Colonic mucosa (tissue), 4 donors: ENCODE measurements at regions of chr22 and their contacts with region 1.

Region 1: GRCh38 chr22:41301105-41302020 is at the start of gene ZC3H7B:
- DNase-seq: peak; percentile 85
- H3K4me3 ChIP-seq: peak within 1 kb of the TSS; percentile 98
- H3K27ac ChIP-seq: peak within 1 kb of the TSS; percentile 77
- H3K4me1 ChIP-seq: peaks cover 3% of the 10 kb centered on the region
- H3K27me3 ChIP-seq: no peaks in the 10 kb centered on the region
- CTCF ChIP-seq: peak; percentile 39
- total RNA-seq, gene ZC3H7B: 35.2 to 51.7 TPM

Region 2: GRCh38 chr22:40982482-40983385 is 318.6 kb before region 1 on chr22:
- intact Hi-C with region 1: no loop called
- DNase-seq: no peak
- H3K4me3 ChIP-seq: no peak overlapping the region
- H3K27ac ChIP-seq: no peak overlapping the region
- H3K4me1 ChIP-seq: no peaks in the 10 kb centered on the region
- H3K27me3 ChIP-seq: no peaks in the 10 kb centered on the region
- CTCF ChIP-seq: no peak

Region 3: DNA sequence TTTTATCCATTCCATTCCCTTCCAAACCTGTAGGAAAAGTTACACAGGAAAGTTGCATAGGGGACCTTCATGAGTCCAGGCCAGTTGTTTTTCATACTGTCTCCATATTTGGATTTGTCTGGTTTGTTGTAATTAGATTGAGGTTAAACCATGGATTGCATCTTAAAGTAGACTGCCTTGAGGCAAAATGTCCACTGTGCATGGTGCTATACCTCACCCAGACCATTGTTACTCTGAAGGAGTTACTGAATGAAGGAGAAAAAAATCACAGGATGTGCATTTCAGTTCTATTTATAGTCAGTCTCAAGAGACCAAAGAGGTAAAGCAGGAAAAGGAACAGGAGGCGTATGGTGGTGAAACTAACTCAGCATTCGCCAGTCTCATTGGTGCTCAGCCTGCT is 125.8 kb before region 1 on chr22:
- intact Hi-C with region 1: no loop called
- DNase-seq: no peak
- H3K4me3 ChIP-seq: no peak overlapping the region
- H3K27ac ChIP-seq: no peak overlapping the region
- H3K4me1 ChIP-seq: no peaks in the 10 kb centered on the region
- H3K27me3 ChIP-seq: no peaks in the 10 kb centered on the region
- CTCF ChIP-seq: no peak

Region 4: GRCh38 chr22:41367039-41367679 is 65.8 kb after region 1 on chr22:
- intact Hi-C with region 1: loop called (anchors 5 kb)
- DNase-seq: peak; percentile 96
- H3K4me3 ChIP-seq: peak overlapping the region; percentile 30
- H3K27ac ChIP-seq: peak overlapping the region; percentile 36
- H3K4me1 ChIP-seq: peaks cover 12% of the 10 kb centered on the region
- H3K27me3 ChIP-seq: no peaks in the 10 kb centered on the region
- CTCF ChIP-seq: no peak

Region 5: DNA sequence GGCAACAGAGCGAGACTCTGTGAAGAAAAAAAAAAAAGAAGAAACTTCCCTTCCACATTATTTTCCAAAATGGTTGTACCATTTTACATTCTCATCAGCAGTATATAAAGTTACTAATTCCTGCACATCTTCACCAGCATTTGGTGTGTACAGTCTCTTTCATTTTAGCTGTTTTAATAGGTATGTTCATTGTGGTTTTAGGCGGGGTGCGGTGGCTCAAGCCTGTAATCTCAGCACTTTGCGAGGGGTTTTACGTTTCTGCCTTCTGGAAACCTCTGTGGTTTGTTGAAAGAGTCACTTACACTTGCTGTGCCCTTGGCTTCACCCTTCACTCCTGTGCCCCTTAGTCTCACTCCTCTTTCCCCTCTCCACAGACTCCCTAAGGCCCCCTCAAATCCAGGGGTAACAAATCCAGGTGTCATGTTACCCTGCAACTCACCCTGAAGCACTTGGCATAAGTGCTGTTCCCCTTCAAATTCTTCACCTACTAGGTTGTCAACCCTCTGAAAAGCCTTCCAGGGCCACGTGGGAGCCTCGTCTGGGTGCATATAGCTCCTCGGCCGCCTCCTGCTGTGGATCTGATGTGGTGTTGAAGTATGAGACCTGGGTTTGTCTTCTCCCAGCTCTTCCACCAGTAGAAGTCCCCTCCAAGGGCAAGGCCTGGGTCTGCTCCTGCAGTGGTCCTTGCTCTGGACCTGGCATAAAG is 124.5 kb after region 1 on chr22:
- intact Hi-C with region 1: no loop called
- DNase-seq: no peak
- H3K4me3 ChIP-seq: no peak overlapping the region
- H3K27ac ChIP-seq: no peak overlapping the region
- H3K4me1 ChIP-seq: no peaks in the 10 kb centered on the region
- H3K27me3 ChIP-seq: no peaks in the 10 kb centered on the region
- CTCF ChIP-seq: no peak

Region 6: GRCh38 chr22:41596776-41597634 is 295.6 kb after region 1 on chr22:
- intact Hi-C with region 1: no loop called
- DNase-seq: peak; percentile 57
- H3K4me3 ChIP-seq: no peak overlapping the region
- H3K27ac ChIP-seq: no peak overlapping the region
- H3K4me1 ChIP-seq: no peaks in the 10 kb centered on the region
- H3K27me3 ChIP-seq: no peaks in the 10 kb centered on the region
- CTCF ChIP-seq: peak; percentile 65